Naive thymus-derived CD8-positive, alpha-beta T cell (primary cell): ENCODE measurements at regions of chr11 and their contacts with region 1.

Region 1: DNA sequence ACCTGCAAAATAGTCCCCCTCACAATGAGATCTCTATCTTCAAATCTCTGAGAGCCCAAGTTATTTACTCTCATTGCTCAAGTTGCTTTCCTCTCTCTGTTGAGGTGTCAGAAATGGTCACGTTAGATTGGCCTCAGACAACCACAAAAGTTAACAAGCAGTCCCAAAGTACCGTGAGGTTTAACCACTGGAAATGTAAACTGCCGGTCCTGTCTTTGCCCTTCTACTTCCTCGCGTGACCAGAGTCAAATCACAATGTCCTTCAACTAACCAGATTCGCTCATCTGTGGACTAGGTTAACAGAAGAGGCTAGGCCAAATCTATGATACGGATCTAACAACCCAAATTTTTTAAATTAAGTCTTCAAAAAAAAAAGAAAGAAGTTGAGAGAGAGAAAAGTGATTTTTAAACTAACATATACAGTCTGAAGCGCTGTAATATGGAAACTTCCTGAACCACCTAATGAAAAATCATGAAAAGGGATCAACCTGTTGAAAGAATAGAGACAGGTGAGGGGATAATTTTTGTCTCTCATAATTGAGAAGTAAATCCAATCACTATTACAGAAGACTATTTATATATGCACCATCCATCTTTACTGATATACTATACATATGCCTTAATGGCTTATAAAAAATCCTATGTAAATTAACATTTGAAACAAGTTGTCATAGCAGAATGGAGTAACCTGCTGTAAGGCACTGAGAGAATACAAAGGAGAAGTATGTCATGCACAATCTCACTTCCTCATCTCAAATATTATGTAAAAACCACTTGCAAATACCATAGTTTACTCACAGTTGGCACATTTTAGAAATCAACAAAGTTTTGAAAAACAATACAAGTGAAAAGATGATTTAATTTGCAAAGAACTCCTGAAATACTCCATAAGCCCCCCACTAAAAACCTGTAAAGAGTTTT is 3.3 kb upstream of the JAML start:
- DNase-seq: peak in 3 of 10 donors; percentile 38 to 40 (median 38)
- ATAC-seq: no peak
- H3K4me3 Mint-ChIP-seq: peak overlapping the region in 9 of 10 donors; percentile 34 to 78 (median 65)
- H3K27ac Mint-ChIP-seq: peak overlapping the region in 3 of 10 donors; percentile 92 to 96 (median 93)
- H3K4me1 Mint-ChIP-seq: peaks cover 10 to 27% (median 15%) of the 10 kb centered on the region in 4 donors
- H3K27me3 Mint-ChIP-seq: no peaks in the 10 kb centered on the region

Region 2: DNA sequence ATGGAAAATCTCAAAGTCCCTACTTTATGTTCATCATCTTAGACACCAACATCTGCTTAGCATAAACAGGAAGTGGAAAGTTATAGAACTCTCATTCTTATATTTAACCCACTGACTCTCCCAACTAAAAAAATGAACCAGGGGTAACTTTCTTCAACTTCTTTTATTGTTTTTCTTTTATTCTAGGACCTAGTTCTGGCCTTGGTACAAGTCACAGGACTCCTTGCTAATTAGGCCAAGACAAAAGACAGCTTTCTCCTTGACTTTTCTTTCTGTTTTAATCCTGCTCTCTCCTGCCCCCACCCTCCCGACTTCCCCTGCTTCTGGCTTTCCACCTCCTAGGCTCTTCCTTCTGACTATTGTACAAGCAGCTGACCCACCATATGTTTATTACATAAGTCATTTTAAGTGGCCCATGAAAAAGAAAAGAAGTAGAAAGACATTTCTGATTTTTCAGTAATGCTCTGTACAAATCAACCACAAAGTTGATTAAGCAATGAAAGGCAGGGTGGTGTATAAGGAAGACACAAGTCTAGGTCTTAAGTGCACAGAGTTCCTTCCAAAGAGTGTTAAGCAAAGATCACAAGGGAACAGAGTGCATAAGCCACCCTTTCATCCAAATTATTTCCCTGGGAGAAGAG is 21.6 kb before region 1 on chr11:
- POLR2A ChIA-PET with region 1: interaction called, 60 read pairs
- DNase-seq: no peak
- ATAC-seq: peak in 1 of 2 donors; percentile 31
- H3K4me3 Mint-ChIP-seq: peak overlapping the region in 9 of 10 donors; percentile 58 to 80 (median 68)
- H3K27ac Mint-ChIP-seq: peak overlapping the region in 7 of 10 donors; percentile 85 to 94 (median 91)
- H3K4me1 Mint-ChIP-seq: peaks cover 20 to 44% (median 30%) of the 10 kb centered on the region in 4 donors
- H3K27me3 Mint-ChIP-seq: no peaks in the 10 kb centered on the region

Region 3: GRCh38 chr11:118240999-118241768 is 13.1 kb after region 1 on chr11:
- POLR2A ChIA-PET with region 1: interaction called, 16 read pairs
- DNase-seq: peak in 6 of 10 donors; percentile 27 to 70 (median 41)
- ATAC-seq: peak; percentile 92 to 94
- H3K4me3 Mint-ChIP-seq: peak overlapping the region; percentile 4 to 82 (median 64)
- H3K27ac Mint-ChIP-seq: peak overlapping the region; percentile 4 to 93 (median 75)
- H3K4me1 Mint-ChIP-seq: peaks cover 42 to 85% (median 73%) of the 10 kb centered on the region in 4 donors
- H3K27me3 Mint-ChIP-seq: no peaks in the 10 kb centered on the region

Region 4: GRCh38 chr11:118251858-118252652 is 23.9 kb after region 1 on chr11 and contains the start of gene MPZL3:
- POLR2A ChIA-PET with region 1: interaction called, 34 read pairs
- DNase-seq: peak; percentile 64 to 96 (median 91)
- ATAC-seq: peak; percentile 79 to 88
- H3K4me3 Mint-ChIP-seq: peak within 1 kb of the TSS; percentile 95 to 99 (median 98)
- H3K27ac Mint-ChIP-seq: peak within 1 kb of the TSS; percentile 99 to 100 (median 100)
- H3K4me1 Mint-ChIP-seq: peaks cover 14 to 44% (median 35%) of the 10 kb centered on the region in 4 donors
- H3K27me3 Mint-ChIP-seq: peaks cover 0 to 3% (median 0%) of the 10 kb centered on the region in 5 donors
- polyA plus RNA-seq, gene MPZL3: 1.9 to 3.4 (median 3.2) TPM